Panc1 (cell line): ENCODE measurements at regions of chr15 and their contacts with region 1.

Region 1: DNA sequence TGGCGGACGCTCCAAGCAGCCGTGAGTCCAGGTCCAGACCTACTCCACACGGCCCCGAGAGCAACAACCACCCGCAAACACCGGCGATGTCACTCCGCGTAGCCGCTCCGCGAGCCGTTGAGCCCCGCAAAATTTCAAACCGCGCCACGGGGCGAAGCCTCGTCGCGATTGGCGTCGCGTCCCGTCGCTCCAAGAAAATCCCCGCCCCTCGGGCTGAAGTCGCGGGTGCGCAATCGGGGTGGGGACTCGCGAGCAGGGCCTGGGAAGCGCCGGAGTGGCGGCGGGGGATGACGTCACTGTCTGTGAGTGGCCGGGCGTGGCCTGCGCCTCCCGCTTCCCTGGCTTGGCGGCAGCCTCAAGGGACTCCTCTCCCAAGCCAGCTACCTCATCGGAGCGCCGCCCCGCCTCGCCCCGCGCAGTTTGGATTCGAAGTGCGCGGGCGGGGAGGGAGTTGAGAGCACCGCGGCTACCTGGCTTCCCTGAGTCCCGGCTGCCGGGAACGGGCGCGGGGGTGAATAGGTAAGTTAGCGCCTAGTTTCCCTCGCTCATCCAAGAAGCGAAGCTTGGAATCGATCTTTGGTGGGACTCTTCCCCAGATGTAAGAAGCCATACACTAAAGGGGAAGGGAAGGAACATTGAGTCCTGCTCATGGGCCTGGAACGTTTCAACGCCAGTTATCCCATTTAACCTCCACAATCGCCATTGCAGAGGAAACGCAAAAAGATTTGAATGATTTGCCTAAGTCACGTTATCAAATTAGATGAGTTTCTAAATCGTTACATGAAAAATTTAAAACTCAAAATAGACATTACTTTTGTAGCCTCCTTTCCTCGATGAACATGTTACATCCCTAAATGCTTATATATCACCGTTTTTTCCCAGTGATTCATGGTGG is at the start of gene PRC1:
- DNase-seq: peak; percentile 86
- ATAC-seq: peak; percentile 99
- H3K4me3 ChIP-seq: peak within 1 kb of the TSS; percentile 78 to 86
- H3K27ac ChIP-seq: peak within 1 kb of the TSS; percentile 95
- H3K4me1 ChIP-seq: peaks cover 20% of the 10 kb centered on the region
- H3K27me3 ChIP-seq: no peaks in the 10 kb centered on the region
- CTCF ChIP-seq: no peak
- total RNA-seq, gene PRC1: 228 TPM

Region 2: GRCh38 chr15:91007266-91007665 is 12.6 kb after region 1 on chr15:
- CTCF ChIA-PET with region 1: no interaction called
- POLR2A ChIA-PET with region 1: interaction called, 11 read pairs
- in situ Hi-C with region 1: no loop called
- intact Hi-C with region 1: no loop called
- DNase-seq: no peak
- ATAC-seq: no peak
- H3K4me3 ChIP-seq: no peak overlapping the region
- H3K27ac ChIP-seq: no peak overlapping the region
- H3K4me1 ChIP-seq: no peaks in the 10 kb centered on the region
- H3K27me3 ChIP-seq: no peaks in the 10 kb centered on the region
- CTCF ChIP-seq: no peak

Region 3: GRCh38 chr15:91126080-91126479 is 131.4 kb after region 1 on chr15:
- CTCF ChIA-PET with region 1: no interaction called
- POLR2A ChIA-PET with region 1: no interaction called
- in situ Hi-C with region 1: no loop called
- intact Hi-C with region 1: no loop called
- DNase-seq: no peak
- ATAC-seq: no peak
- H3K4me3 ChIP-seq: no peak overlapping the region
- H3K27ac ChIP-seq: no peak overlapping the region
- H3K4me1 ChIP-seq: no peaks in the 10 kb centered on the region
- H3K27me3 ChIP-seq: peaks cover 13% of the 10 kb centered on the region
- CTCF ChIP-seq: no peak

Region 4: DNA sequence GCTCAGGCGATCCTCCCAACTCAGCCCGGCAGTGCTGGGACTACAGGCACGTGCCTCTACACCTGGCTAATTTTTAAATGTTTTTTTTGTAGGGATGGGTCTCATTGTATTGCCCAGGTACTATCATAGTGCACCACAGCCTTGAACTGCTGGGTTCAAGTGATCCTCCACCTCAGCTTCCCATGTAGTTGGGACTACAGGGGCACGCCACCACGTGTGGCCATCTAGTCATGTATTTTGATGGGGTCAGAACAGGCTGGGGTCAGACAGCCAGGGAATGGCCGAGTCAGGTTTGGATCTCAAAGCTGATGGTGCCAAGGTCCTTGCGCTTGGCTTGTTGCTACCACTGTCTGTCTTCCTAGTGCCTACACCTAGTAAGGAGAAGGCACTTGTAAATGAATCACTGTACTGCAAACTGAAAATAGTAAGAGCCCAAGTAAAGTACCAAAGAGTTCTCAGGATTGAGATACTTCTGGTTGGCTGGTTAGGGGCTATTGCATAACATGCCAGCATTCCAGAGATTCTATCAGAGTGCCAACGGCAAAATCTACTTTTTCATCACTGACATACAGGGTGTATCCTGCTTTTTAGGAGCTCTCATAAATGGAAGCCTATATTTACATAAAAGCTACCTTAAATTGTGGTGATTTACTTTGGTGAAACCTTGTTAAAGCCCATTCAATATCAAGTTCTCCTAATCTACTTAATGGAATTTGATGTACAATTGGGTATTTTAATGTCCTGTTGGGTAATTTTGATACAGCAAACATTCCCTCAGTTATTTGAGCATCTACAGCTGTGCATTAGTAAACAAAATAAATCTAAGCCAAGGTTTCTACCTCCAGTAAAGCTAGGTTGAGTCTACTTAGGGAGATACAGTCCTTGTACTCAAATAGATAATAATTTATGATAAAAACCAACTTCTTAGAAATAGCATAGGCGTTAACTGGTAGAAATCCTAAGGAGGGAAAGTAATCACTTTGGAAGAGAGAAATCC is 1874.6 kb after region 1 on chr15:
- CTCF ChIA-PET with region 1: no interaction called
- POLR2A ChIA-PET with region 1: interaction called, 10 read pairs
- in situ Hi-C with region 1: no loop called
- intact Hi-C with region 1: no loop called
- DNase-seq: no peak
- ATAC-seq: peak; percentile 61
- H3K4me3 ChIP-seq: no peak overlapping the region
- H3K27ac ChIP-seq: peak overlapping the region; percentile 82
- H3K4me1 ChIP-seq: peaks cover 19% of the 10 kb centered on the region
- H3K27me3 ChIP-seq: no peaks in the 10 kb centered on the region
- CTCF ChIP-seq: no peak